Activated T-helper 1 cell treated with anti-CD3 and anti-CD28 coated beads, Interleukin-12 subunit alpha, Interleukin-12 subunit beta, Interleukin-2, Interleukin-4 antibody, amounts not matched to agents 30 ng/mL and 10 ng/mL and 1 ng/mL, durations not matched to agents 14 hours and 24 hours and 36 hours (primary cell): ENCODE measurements at regions of chr4 and their contacts with region 1.

Region 1: DNA sequence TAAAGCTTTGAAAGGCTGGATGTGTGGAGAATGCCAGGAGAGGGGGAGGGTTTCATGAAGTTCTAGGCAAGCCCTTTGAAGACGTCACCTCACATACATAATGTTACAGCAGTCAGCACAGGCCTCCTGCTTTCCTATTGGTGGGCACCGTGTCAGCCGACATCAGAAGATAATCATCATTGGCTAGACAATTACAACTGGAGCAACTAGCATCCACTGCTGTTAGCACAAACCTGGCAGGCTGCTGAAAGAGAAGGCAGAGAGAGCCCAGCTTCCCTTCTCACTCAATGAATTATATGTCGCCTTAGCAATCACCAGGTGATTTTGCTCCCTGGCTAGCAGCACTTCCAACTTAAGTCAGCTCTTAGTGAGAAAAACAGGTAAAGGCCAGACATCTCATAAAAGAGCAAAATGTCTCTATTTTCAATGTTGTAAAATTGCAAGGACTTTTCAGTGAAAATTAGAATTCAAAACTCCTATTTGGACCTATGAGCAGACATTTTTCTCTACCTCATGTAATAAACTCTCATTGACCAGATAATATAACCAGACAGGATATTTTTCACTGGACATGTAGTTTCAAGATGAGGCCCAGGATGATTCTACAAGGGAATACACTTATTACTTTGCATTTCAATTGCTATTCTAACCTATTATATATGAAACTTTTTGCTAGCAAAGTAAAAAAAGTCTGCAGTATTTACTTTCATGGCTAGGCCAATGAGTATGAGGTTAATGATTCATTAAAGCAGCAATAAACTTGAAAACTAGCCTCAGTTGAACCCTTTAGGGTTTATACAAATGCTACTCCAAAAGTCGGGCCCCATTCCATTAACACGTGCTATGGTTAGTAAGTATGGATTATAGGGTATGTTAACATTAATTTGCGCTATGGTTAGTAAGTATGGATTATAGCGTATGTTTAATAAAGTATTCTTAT is 4.3 kb downstream of the ELOVL6 start:
- DNase-seq: peak; percentile 77
- H3K4me3 Mint-ChIP-seq: peak overlapping the region; percentile 50
- H3K27ac Mint-ChIP-seq: peak overlapping the region; percentile 85
- H3K4me1 Mint-ChIP-seq: peaks cover 52% of the 10 kb centered on the region
- H3K27me3 Mint-ChIP-seq: peaks cover 2% of the 10 kb centered on the region

Region 2: DNA sequence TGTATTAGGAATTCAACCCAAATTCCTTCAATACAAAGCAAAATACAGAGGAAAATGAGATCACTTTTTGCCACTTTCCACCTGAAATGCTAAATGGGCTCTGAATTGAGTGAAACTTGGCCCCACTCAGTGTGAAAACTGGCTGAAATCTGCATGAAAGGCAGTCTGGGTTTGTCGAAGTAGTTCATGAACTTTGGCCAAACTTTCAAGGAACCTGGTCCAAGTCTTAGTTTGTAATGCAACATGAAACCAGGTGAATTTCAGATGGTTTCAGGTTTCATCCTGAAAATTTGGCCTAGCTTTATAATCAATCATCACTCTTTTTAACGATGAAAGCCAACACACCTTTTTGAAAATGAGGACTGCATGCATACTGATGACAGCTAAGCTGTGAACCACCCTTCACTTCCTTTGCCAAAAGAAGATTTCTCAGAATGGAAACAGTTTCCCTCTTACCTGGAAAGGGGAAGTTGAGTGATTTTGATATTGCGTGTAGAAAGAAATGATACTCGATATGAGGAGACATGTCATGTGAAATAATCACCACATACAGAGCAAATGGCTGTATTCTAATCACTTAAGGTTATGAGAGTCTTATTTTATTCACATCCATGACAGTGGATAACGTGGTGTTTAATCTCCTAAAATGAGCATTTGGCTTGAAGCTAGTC is 1221.3 kb before region 1 on chr4:
- intact Hi-C with region 1: loop called (anchors 5 kb)
- DNase-seq: peak; percentile 12
- H3K4me3 Mint-ChIP-seq: peak overlapping the region; percentile 30
- H3K27ac Mint-ChIP-seq: peak overlapping the region; percentile 91
- H3K4me1 Mint-ChIP-seq: peaks cover 35% of the 10 kb centered on the region
- H3K27me3 Mint-ChIP-seq: no peaks in the 10 kb centered on the region

Region 3: GRCh38 chr4:109820563-109820962 is 373.5 kb before region 1 on chr4:
- intact Hi-C with region 1: loop called (anchors 2 kb)
- DNase-seq: no peak
- H3K4me3 Mint-ChIP-seq: no peak overlapping the region
- H3K27ac Mint-ChIP-seq: peak overlapping the region; percentile 66
- H3K4me1 Mint-ChIP-seq: peaks cover 59% of the 10 kb centered on the region
- H3K27me3 Mint-ChIP-seq: no peaks in the 10 kb centered on the region

Region 4: GRCh38 chr4:110049951-110050925 is 143.9 kb before region 1 on chr4:
- intact Hi-C with region 1: loop called (anchors 1 kb)
- DNase-seq: peak; percentile 27
- H3K4me3 Mint-ChIP-seq: no peak overlapping the region
- H3K27ac Mint-ChIP-seq: no peak overlapping the region
- H3K4me1 Mint-ChIP-seq: peaks cover 52% of the 10 kb centered on the region
- H3K27me3 Mint-ChIP-seq: no peaks in the 10 kb centered on the region

Region 5: DNA sequence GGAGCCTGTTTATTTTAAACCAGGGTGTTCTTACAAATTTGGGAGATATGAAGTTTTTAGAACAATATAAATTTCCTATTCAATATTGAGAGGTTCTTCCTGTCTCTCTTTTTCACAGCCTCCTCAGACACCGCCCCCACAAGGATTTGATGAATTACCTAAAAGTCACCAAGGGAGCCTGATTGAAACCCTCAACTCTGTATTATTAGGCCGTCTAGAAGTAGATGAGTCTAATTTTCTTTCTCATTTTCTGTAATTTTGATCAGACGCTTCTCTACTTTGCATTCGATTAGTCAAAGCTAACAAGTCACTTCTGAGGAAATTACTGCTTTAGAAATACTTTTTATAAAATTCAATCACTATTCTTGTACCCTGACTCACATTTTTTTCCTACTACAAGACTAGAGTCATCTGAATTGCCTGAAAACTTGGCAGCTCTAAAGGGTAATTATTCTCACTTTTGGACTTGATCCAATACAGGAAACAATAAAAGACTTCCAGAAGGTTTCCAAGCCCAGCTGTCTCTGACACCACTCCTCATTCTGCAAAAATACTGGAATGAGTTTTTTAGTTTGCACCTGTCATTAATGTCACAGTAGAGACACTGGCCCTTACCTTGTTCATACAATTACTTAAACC is 106.9 kb before region 1 on chr4:
- intact Hi-C with region 1: loop called (anchors 1 kb)
- DNase-seq: no peak
- H3K4me3 Mint-ChIP-seq: no peak overlapping the region
- H3K27ac Mint-ChIP-seq: peak overlapping the region; percentile 38
- H3K4me1 Mint-ChIP-seq: peaks cover 72% of the 10 kb centered on the region
- H3K27me3 Mint-ChIP-seq: no peaks in the 10 kb centered on the region

Region 6: GRCh38 chr4:110211007-110211769 is 17.1 kb after region 1 on chr4:
- intact Hi-C with region 1: loop called (anchors 1 kb)
- DNase-seq: no peak
- H3K4me3 Mint-ChIP-seq: no peak overlapping the region
- H3K27ac Mint-ChIP-seq: no peak overlapping the region
- H3K4me1 Mint-ChIP-seq: peaks cover 11% of the 10 kb centered on the region
- H3K27me3 Mint-ChIP-seq: peaks cover 4% of the 10 kb centered on the region

Region 7: GRCh38 chr4:110516106-110516922 is 322.2 kb after region 1 on chr4:
- intact Hi-C with region 1: loop called (anchors 5 kb)
- DNase-seq: peak; percentile 60
- H3K4me3 Mint-ChIP-seq: peak overlapping the region; percentile 83
- H3K27ac Mint-ChIP-seq: peak overlapping the region; percentile 46
- H3K4me1 Mint-ChIP-seq: peaks cover 23% of the 10 kb centered on the region
- H3K27me3 Mint-ChIP-seq: peaks cover 10% of the 10 kb centered on the region